K562 (cell line): ENCODE measurements at regions of chr1 and their contacts with region 1.

Region 1: DNA sequence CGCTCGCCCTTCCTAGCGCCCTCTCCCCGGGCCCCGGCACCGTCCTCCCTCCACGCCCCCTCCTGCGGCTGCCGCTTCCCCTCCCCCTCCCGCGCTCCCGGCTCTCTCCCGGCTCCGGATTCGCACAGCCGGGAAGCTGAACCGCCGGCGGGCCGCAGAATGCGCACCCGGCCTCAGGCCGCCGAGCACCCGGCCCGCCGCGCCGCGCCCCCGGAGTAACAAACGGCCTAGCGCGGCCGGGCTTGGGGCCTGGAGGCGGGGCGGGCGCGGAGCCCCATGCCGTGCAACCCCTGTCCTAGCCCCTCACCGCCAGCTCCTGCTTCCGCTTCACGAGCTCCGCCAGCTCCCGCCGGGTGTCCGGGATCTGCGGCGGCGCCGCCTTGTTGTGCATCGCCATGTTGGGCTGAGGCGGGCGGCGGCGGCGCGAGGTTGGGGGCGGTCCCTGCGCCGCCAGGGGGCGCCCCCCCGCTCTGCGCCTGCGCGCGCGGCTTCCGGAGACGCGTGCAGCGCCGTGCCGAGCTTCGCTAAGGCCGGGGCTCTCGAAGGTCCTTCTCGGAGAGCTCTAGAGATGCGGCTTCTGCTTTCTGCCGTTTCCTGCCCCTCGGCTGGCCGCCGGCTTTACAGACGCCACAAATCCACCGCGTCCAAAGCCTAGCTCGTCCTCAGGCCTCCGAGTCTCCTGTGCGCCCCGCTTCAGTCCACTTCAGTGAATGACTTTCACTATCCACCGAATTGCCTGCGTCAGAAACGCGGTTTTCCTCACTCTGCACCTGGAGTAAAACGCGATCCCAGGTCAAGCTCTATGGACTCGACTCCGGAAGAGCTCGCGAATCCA is at the start of gene MEAF6:
- DNase-seq: peak; percentile 93 to 96 (median 95)
- ATAC-seq: peak; percentile 98
- H3K4me3 ChIP-seq: peak within 1 kb of the TSS; percentile 97
- H3K27ac ChIP-seq: peak within 1 kb of the TSS; percentile 99
- H3K4me1 ChIP-seq: peaks cover 13 to 17% of the 10 kb centered on the region in 2 experiments; a peak in 4 of 5 replicates
- H3K27me3 ChIP-seq: no peaks in the 10 kb centered on the region
- CTCF ChIP-seq: peak; percentile 67 to 88 (median 78)
- EP300 ChIP-seq: no peak; the same call in 1 of the 2 replicates
- POLR2A ChIP-seq: peak; percentile 94
- RAD21 ChIP-seq: peak in 1 of 2 experiments; percentile 34; a peak in 2 of 4 replicates
- polyA plus RNA-seq, gene MEAF6: 55.0 to 66.3 TPM

Region 2: DNA sequence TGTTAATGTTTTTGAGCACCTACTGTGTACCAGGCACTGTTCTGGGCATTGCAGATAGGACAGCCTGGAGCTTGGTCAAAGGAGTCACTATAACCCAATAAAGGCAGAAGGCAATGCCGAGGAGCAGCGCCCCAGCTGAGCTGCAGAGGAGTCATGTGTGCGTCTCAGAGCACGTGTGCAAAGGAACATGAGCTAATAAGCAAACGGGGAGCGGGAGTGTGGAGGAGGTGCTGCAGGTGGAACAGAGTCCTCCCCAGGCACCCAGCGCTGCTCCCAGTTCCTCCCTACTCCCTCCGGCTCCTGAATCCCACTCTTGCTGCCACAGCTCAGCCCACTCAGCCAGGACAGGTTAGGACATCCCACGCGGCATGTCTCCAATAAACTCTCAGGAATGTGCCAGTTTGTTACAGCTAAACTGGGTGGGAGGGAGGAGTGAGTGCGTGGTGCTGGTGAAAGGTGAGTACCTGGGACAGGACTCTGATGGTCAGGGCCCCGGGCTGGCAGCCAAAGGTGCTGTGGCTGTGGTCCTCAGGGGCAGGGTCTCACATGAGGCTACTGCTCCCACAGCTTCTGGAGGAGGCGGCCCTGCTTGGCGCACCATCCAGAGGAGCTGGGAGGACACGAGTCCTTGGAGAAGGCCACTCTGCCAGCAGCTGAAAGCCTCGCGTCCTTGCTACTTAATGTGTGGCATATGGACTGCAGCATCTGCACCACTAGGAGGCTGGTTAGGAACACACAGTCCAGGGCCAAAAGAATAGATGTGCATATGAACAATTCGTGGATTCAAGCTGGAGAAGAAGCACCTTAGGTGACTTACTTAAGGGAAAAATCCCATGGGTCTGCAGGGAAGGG is 532.6 kb before region 1 on chr1:
- CTCF ChIA-PET with region 1: no interaction called
- POLR2A ChIA-PET with region 1: no interaction called
- in situ Hi-C with region 1: no loop called
- intact Hi-C with region 1: no loop called
- DNase-seq: no peak
- ATAC-seq: no peak
- H3K4me3 ChIP-seq: no peak overlapping the region
- H3K27ac ChIP-seq: no peak overlapping the region
- H3K4me1 ChIP-seq: no peaks in the 10 kb centered on the region
- H3K27me3 ChIP-seq: peaks cover 0 to 27% of the 10 kb centered on the region in 2 experiments; a peak in 2 of 5 replicates
- CTCF ChIP-seq: no peak
- EP300 ChIP-seq: no peak
- POLR2A ChIP-seq: no peak
- RAD21 ChIP-seq: no peak

Region 3: GRCh38 chr1:37410815-37411214 is 103.8 kb before region 1 on chr1:
- CTCF ChIA-PET with region 1: no interaction called
- POLR2A ChIA-PET with region 1: no interaction called
- in situ Hi-C with region 1: no loop called
- intact Hi-C with region 1: no loop called
- DNase-seq: peak; percentile 62 to 69 (median 65)
- ATAC-seq: peak; percentile 94
- H3K4me3 ChIP-seq: no peak overlapping the region
- H3K27ac ChIP-seq: no peak overlapping the region
- H3K4me1 ChIP-seq: peaks cover 5 to 12% of the 10 kb centered on the region in 2 experiments; a peak in 3 of 5 replicates
- H3K27me3 ChIP-seq: peaks cover 5 to 16% of the 10 kb centered on the region in 2 experiments; a peak in 4 of 5 replicates
- CTCF ChIP-seq: no peak
- EP300 ChIP-seq: no peak
- POLR2A ChIP-seq: no peak
- RAD21 ChIP-seq: no peak

Region 4: GRCh38 chr1:37479255-37480124 is 35.1 kb before region 1 on chr1:
- CTCF ChIA-PET with region 1: no interaction called
- POLR2A ChIA-PET with region 1: interaction called, 17 read pairs
- in situ Hi-C with region 1: no loop called
- intact Hi-C with region 1: no loop called
- DNase-seq: peak; percentile 92 to 97 (median 94)
- ATAC-seq: peak; percentile 85
- H3K4me3 ChIP-seq: peak overlapping the region; percentile 35
- H3K27ac ChIP-seq: peak overlapping the region; percentile 94
- H3K4me1 ChIP-seq: peaks cover 52 to 74% of the 10 kb centered on the region in 2 experiments
- H3K27me3 ChIP-seq: no peaks in the 10 kb centered on the region
- CTCF ChIP-seq: no peak
- EP300 ChIP-seq: peak; percentile 73
- POLR2A ChIP-seq: peak; percentile 65
- RAD21 ChIP-seq: no peak

Region 5: GRCh38 chr1:37498872-37499617 is 15.5 kb before region 1 on chr1:
- CTCF ChIA-PET with region 1: no interaction called
- POLR2A ChIA-PET with region 1: interaction called, 42 read pairs
- in situ Hi-C with region 1: no loop called
- intact Hi-C with region 1: no loop called
- DNase-seq: peak in 2 of 4 experiments; percentile 11 to 31
- ATAC-seq: peak; percentile 32
- H3K4me3 ChIP-seq: no peak overlapping the region
- H3K27ac ChIP-seq: no peak overlapping the region
- H3K4me1 ChIP-seq: peaks cover 0 to 4% of the 10 kb centered on the region in 2 experiments; a peak in 1 of 5 replicates
- H3K27me3 ChIP-seq: no peaks in the 10 kb centered on the region
- CTCF ChIP-seq: no peak
- EP300 ChIP-seq: no peak
- POLR2A ChIP-seq: no peak
- RAD21 ChIP-seq: no peak

Region 6: DNA sequence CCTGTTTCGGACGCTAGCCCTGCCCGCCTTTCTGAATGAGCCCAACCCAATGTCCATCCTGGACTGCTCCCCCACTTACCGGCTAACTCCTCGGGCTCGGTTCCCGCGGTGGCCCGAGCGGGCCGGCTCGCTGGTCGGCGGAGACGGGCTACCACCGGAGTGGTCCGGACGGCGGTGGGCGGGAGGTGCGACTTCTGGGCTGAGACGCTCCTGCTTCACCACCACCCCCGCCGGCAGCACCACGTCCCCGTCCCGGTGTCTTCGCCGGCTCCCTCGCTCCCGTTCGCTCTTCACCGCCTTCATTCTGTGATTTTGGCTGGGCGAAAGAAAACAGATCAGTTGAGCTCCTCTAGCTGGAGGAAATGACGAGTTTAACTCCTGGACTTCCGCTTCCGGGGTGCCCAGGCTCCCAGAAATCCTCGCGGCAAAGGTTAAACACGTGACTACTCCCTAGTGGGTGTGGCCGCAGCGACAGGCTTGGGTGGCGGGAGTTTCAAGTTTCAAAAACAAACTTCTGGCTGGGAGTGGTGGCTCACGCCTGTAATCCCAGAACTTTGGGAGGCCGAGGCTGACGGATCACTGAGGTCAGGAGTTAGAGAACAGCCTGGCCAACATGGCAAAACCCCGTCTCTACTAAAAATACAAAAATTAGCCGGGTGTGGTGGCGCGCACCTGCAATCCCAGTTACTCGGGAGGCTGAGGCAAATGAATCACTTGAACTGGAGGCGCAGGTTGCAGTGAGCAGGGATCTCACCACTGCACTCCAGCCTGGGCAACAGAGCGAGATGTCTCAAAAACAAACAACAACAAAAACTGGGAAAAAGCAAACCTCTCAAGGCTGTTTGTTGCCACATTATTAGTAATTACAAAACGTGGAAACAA is 39.6 kb after region 1 on chr1 and contains the start of gene SNIP1:
- CTCF ChIA-PET with region 1: no interaction called
- POLR2A ChIA-PET with region 1: interaction called, 18 read pairs
- in situ Hi-C with region 1: no loop called
- intact Hi-C with region 1: loop called (anchors 5 kb)
- DNase-seq: peak; percentile 95 to 98 (median 96)
- ATAC-seq: peak; percentile 95
- H3K4me3 ChIP-seq: peak within 1 kb of the TSS; percentile 82
- H3K27ac ChIP-seq: peak within 1 kb of the TSS; percentile 86
- H3K4me1 ChIP-seq: peaks cover 21 to 24% of the 10 kb centered on the region in 2 experiments
- H3K27me3 ChIP-seq: no peaks in the 10 kb centered on the region
- CTCF ChIP-seq: no peak
- EP300 ChIP-seq: 0 out of 2 replicates have a peak, but pooled peaks have one; percentile 24
- POLR2A ChIP-seq: peak; percentile 94
- RAD21 ChIP-seq: no peak
- polyA plus RNA-seq, gene SNIP1: 2.9 TPM

Region 7: GRCh38 chr1:37726751-37727585 is 212.4 kb after region 1 on chr1:
- CTCF ChIA-PET with region 1: no interaction called
- POLR2A ChIA-PET with region 1: no interaction called
- in situ Hi-C with region 1: no loop called
- intact Hi-C with region 1: no loop called
- DNase-seq: no peak
- ATAC-seq: no peak
- H3K4me3 ChIP-seq: no peak overlapping the region
- H3K27ac ChIP-seq: no peak overlapping the region
- H3K4me1 ChIP-seq: peaks cover 6 to 15% of the 10 kb centered on the region in 2 experiments
- H3K27me3 ChIP-seq: peaks cover 28 to 70% of the 10 kb centered on the region in 2 experiments
- CTCF ChIP-seq: no peak
- EP300 ChIP-seq: no peak
- POLR2A ChIP-seq: no peak
- RAD21 ChIP-seq: no peak

Region 8: DNA sequence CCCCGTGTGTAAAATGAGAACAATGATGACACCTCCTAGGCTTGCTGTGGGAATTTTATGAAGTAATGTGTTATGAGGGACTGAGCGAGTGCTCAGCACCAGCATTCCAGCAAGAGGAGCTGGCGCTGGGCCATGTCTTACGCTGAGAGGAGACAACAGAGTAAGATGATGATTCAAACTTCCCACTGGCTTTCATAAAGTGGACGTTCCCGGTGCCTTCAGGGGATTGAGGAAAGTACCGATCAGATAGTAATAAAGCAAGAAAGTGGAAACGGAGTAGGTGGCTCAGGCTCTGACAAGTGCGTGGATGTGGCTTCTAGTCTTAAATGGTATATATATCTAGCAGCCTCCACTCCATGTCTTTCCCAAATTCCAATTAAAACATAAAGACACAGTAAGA is 226.6 kb after region 1 on chr1:
- CTCF ChIA-PET with region 1: no interaction called
- POLR2A ChIA-PET with region 1: no interaction called
- in situ Hi-C with region 1: no loop called
- intact Hi-C with region 1: no loop called
- DNase-seq: no peak
- ATAC-seq: no peak
- H3K4me3 ChIP-seq: no peak overlapping the region
- H3K27ac ChIP-seq: no peak overlapping the region
- H3K4me1 ChIP-seq: no peaks in the 10 kb centered on the region
- H3K27me3 ChIP-seq: peaks cover 14 to 22% of the 10 kb centered on the region in 2 experiments; a peak in 4 of 5 replicates
- CTCF ChIP-seq: no peak
- EP300 ChIP-seq: no peak
- POLR2A ChIP-seq: no peak
- RAD21 ChIP-seq: no peak